CD4-positive, alpha-beta memory T cell (primary cell): ENCODE measurements at regions of chr3 and their contacts with region 1.

Region 1: DNA sequence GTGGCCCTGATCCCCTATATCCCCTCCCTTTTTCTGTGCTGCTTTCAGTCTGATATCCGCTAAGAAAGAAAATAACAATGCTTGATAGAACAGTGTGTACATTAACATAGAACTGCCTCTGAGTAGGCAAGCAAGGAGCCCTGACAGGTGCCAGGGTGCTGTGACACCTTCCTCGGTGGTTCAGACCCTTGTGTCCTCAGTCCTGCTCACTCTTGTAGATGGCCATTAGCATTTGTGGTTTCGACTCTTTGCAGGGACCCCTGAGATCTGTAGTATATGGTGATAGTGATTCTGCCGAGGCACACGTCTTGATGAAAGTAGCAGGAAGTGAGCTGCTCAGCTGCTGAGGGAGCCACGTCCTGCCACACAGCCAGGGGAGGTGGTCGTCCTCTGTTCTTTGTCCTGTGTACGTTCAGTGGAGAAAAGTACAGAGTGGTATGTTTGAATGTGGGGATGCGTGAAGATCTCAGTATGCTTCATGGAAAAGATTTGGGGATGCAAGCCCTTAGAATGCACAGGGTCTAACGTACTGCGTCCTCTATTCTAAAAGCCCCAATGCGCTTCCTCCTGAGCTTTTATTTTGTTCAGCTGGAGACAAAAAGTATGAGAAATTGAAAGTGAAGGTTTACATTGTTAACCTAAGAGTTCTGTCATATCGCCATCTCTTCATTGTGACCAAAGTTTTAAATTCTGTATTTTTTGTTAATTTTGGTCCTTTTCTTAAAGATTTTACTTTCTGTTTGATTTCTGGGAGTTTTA is 35.4 kb downstream of the PXYLP1 start:
- DNase-seq: peak; percentile 51 to 68 (median 58)
- H3K4me3 ChIP-seq: peak overlapping the region; percentile 54 to 66
- H3K4me3 Mint-ChIP-seq: peak overlapping the region; percentile 88 to 99 (median 92)
- H3K27ac ChIP-seq: peak overlapping the region; percentile 73
- H3K27ac Mint-ChIP-seq: peak overlapping the region; percentile 85 to 98 (median 96)
- H3K4me1 ChIP-seq: peaks cover 27% of the 10 kb centered on the region
- H3K4me1 Mint-ChIP-seq: peaks cover 17 to 57% (median 29%) of the 10 kb centered on the region in 4 donors
- H3K27me3 ChIP-seq: no peaks in the 10 kb centered on the region
- H3K27me3 Mint-ChIP-seq: no peaks in the 10 kb centered on the region

Region 2: GRCh38 chr3:141151439-141151838 is 115.5 kb before region 1 on chr3:
- CTCF ChIA-PET with region 1: no interaction called
- POLR2A ChIA-PET with region 1: no interaction called
- intact Hi-C with region 1: no loop called
- DNase-seq: no peak
- H3K4me3 ChIP-seq: no peak overlapping the region
- H3K4me3 Mint-ChIP-seq: no peak overlapping the region
- H3K27ac ChIP-seq: no peak overlapping the region
- H3K27ac Mint-ChIP-seq: no peak overlapping the region
- H3K4me1 ChIP-seq: no peaks in the 10 kb centered on the region
- H3K4me1 Mint-ChIP-seq: no peaks in the 10 kb centered on the region
- H3K27me3 ChIP-seq: no peaks in the 10 kb centered on the region
- H3K27me3 Mint-ChIP-seq: peaks cover 14 to 18% of the 10 kb centered on the region in 2 donors

Region 3: DNA sequence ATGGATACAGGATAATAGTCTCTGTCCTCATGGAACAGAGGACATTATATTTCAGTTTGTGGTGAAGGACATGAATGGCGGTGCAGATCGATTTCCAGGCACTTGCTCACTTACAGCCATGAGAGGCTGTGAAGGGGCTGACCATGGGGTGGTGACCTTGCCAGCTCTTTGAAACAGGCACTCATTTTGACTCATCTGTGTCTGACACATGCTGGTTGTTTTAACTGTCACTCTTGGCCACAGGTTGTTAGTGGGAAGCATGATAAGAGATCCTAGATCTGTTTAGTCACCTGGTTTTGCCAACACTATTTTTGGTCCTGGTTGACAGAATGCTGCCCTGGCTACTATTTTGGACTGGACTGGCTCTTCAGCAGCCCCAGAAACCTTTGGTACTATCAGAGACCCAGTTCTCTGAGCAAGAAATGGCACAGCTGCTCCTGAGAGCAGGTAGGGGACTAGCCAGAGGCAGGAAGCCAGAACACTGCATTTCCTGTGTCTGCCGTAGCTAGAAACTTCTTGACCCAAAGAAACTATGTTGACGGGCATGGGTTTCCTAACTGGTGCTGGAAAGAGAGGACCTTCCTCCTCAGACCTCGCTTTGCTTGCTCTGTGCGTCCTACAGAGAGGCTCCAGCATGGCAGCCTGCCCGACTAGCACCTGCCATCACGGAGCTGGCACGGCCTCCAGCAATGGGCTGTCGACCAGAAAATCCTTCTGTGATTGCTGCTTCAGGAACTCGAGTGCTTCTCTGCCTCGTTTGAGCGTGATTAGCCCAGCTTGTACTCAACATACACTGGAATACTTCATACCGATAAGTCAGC is 29.1 kb before region 1 on chr3:
- CTCF ChIA-PET with region 1: interaction called, 78 read pairs
- POLR2A ChIA-PET with region 1: interaction called, 130 read pairs
- intact Hi-C with region 1: no loop called
- DNase-seq: peak in 2 of 5 donors; percentile 5 to 6
- H3K4me3 ChIP-seq: no peak overlapping the region
- H3K4me3 Mint-ChIP-seq: peak overlapping the region in 7 of 8 donors; percentile 17 to 74 (median 48)
- H3K27ac ChIP-seq: no peak overlapping the region
- H3K27ac Mint-ChIP-seq: peak overlapping the region; percentile 8 to 90 (median 64)
- H3K4me1 ChIP-seq: peaks cover 36% of the 10 kb centered on the region
- H3K4me1 Mint-ChIP-seq: peaks cover 29 to 61% (median 50%) of the 10 kb centered on the region in 4 donors
- H3K27me3 ChIP-seq: no peaks in the 10 kb centered on the region
- H3K27me3 Mint-ChIP-seq: no peaks in the 10 kb centered on the region

Region 4: DNA sequence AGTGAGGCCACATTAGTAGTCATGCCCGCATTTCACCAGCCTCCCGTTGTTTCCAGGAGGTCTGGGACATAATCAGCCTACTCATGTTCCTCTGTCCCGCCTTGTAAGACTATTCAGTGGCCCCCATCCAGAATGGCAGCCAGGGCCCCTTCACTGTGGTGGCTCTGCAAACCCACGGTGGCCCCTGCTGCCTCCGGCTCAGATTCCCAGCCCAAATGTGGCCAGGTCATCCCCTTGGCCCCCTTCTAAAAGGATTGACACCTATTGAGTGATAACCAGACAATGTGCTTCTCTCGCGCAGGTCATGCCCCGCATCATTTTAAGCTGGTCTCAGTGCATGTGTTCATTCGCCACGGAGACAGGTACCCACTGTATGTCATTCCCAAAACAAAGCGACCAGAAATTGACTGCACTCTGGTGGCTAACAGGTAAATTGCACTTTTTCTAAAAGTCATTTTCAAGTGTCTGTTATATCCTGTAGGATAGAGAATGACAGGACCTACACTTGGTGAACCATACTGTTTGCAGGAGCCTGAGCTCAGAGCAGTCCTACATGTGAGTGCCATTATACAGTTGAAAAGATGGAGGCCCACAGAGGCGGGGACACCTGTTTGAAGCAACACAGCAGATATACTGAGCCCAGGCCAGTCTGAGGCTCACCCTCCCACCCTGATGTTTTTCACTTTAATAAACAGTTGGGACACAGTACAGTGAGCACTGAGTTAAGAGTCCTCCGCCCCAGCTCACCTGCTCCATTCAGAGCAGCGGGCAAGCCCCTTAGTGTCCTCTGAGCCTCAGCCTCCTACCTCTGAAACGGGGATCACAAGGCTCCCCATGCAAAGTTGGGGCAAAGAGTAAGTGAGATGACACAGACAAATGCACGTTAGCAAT is 12.3 kb after region 1 on chr3:
- CTCF ChIA-PET with region 1: interaction called, 7 read pairs
- POLR2A ChIA-PET with region 1: interaction called, 12 read pairs
- intact Hi-C with region 1: loop called (anchors 1 kb)
- DNase-seq: peak in 4 of 5 donors; percentile 24 to 39 (median 26)
- H3K4me3 ChIP-seq: no peak overlapping the region
- H3K4me3 Mint-ChIP-seq: peak overlapping the region in 2 of 8 donors; percentile 2 to 14
- H3K27ac ChIP-seq: no peak overlapping the region
- H3K27ac Mint-ChIP-seq: peak overlapping the region in 2 of 7 donors; percentile 36 to 48
- H3K4me1 ChIP-seq: peaks cover 18% of the 10 kb centered on the region
- H3K4me1 Mint-ChIP-seq: peaks cover 16 to 25% (median 19%) of the 10 kb centered on the region in 4 donors
- H3K27me3 ChIP-seq: no peaks in the 10 kb centered on the region
- H3K27me3 Mint-ChIP-seq: no peaks in the 10 kb centered on the region